Activated CD8-positive, alpha-beta T cell treated with anti-CD3 and anti-CD28 coated beads, Interleukin-2, amount 10 ng/mL, durations not matched to agents 7 days and 5 days (primary cell): ENCODE measurements at regions of chr11 and their contacts with region 1.

Region 1: GRCh38 chr11:94897330-94897768 is 76.0 kb downstream of the CWC15 start:
- DNase-seq: peak; percentile 59
- ATAC-seq: no peak
- H3K4me3 Mint-ChIP-seq: no peak overlapping the region
- H3K27ac Mint-ChIP-seq: no peak overlapping the region
- H3K4me1 Mint-ChIP-seq: no peaks in the 10 kb centered on the region
- H3K27me3 Mint-ChIP-seq: no peaks in the 10 kb centered on the region

Region 2: GRCh38 chr11:94623120-94623735 is 274.1 kb before region 1 on chr11:
- CTCF ChIA-PET with region 1: interaction called, 21 read pairs
- POLR2A ChIA-PET with region 1: no interaction called
- DNase-seq: peak; percentile 63
- ATAC-seq: peak; percentile 82
- H3K4me3 Mint-ChIP-seq: no peak overlapping the region
- H3K27ac Mint-ChIP-seq: no peak overlapping the region
- H3K4me1 Mint-ChIP-seq: no peaks in the 10 kb centered on the region
- H3K27me3 Mint-ChIP-seq: peaks cover 3% of the 10 kb centered on the region

Region 3: DNA sequence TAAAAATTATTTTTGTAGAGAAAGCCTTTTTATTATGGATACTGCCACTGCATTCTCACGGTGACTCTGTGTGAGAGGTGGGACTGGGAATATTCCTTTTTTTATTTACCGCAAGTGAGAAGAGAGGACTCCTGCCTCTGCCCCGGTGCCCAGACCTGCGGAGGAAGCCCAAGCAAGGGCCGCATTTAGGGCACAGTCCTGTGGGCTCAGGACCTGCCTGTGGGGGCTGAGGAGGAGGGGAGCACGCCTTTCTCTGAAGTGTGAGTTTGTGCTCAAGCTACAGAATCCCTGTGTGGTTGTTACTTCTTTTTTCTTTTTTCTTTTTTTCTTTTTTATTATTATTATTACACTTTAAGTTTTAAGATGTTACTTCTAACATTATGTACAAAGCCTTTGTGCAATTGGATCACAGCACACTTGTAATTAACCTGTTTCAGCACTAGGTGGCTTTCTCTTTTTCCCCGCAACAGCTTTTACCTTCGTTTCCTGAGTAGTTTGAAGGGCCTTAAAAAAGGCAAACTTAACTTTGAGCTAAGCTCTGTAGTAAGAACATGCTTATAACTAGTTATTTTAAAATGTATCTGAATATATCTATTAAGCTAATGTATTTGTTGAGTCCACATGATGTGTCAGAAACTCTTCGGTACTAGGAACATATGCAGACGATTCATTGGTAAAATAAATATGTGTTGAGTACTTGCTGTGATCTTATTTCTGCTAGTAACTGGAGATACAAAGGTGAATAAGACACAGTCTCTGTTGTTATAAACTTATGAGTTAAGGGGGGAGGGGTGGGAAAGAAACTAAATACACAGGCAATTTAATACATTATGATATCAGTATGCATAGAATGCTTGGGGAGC is 110.9 kb before region 1 on chr11:
- CTCF ChIA-PET with region 1: interaction called, 10 read pairs
- POLR2A ChIA-PET with region 1: no interaction called
- DNase-seq: no peak
- ATAC-seq: peak; percentile 61
- H3K4me3 Mint-ChIP-seq: no peak overlapping the region
- H3K27ac Mint-ChIP-seq: no peak overlapping the region
- H3K4me1 Mint-ChIP-seq: no peaks in the 10 kb centered on the region
- H3K27me3 Mint-ChIP-seq: peaks cover 19% of the 10 kb centered on the region

Region 4: DNA sequence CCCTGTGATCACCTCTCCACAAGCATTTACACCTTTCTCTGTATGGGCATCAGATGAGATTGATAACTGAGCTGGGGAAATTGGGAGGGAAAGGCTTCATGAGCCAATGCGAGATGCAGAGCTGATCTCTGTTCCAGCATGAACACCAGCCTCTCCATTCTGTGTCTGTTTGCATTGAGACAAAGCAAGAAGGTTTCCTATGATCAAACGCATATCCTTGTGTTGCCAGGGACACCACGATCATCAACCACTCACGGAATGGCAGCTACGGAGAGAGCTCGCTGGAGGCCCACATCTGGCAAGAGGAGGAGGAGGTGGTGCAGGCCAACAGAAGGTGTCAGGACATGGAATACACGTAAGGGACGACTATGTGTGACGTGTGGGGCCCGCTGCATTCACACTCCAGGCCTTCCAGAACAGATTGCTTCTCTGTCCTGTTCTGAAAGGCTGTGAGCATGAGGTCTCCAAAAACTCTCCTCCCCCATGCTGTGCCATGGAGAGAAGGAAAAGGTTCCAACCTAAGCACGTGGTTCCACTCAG is 32.8 kb before region 1 on chr11:
- CTCF ChIA-PET with region 1: no interaction called
- POLR2A ChIA-PET with region 1: no interaction called
- DNase-seq: no peak
- ATAC-seq: no peak
- H3K4me3 Mint-ChIP-seq: no peak overlapping the region
- H3K27ac Mint-ChIP-seq: no peak overlapping the region
- H3K4me1 Mint-ChIP-seq: no peaks in the 10 kb centered on the region
- H3K27me3 Mint-ChIP-seq: no peaks in the 10 kb centered on the region

Region 5: DNA sequence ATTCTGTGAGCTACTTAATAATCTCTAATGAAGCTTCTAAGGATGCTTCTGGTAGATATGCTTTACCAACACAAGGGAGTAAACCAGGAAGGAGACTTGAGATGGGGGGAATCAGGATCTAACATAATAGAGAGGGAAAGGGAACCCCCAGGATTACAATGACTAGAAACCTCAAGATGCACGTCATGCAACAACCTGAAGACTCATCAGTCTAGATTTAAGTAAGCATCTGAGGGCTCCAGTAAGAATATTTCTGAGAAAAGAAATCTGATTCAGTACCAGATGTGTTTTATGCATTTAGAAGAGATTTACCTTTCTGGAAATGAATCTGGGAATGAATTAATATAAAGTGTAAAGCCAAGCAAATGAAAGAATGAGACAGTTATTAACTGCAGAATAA is 91.4 kb after region 1 on chr11:
- CTCF ChIA-PET with region 1: no interaction called
- POLR2A ChIA-PET with region 1: no interaction called
- DNase-seq: no peak
- ATAC-seq: no peak
- H3K4me3 Mint-ChIP-seq: no peak overlapping the region
- H3K27ac Mint-ChIP-seq: no peak overlapping the region
- H3K4me1 Mint-ChIP-seq: no peaks in the 10 kb centered on the region
- H3K27me3 Mint-ChIP-seq: peaks cover 28% of the 10 kb centered on the region

Region 6: GRCh38 chr11:95014184-95014821 is 117.0 kb after region 1 on chr11:
- CTCF ChIA-PET with region 1: no interaction called
- POLR2A ChIA-PET with region 1: no interaction called
- DNase-seq: no peak
- ATAC-seq: no peak
- H3K4me3 Mint-ChIP-seq: no peak overlapping the region
- H3K27ac Mint-ChIP-seq: no peak overlapping the region
- H3K4me1 Mint-ChIP-seq: no peaks in the 10 kb centered on the region
- H3K27me3 Mint-ChIP-seq: peaks cover 20% of the 10 kb centered on the region

Region 7: GRCh38 chr11:95024958-95025357 is 127.6 kb after region 1 on chr11 and contains the start of gene KDM4E:
- CTCF ChIA-PET with region 1: no interaction called
- POLR2A ChIA-PET with region 1: no interaction called
- DNase-seq: no peak
- ATAC-seq: no peak
- H3K4me3 Mint-ChIP-seq: no peak within 1 kb of the TSS
- H3K27ac Mint-ChIP-seq: no peak within 1 kb of the TSS
- H3K4me1 Mint-ChIP-seq: no peaks in the 10 kb centered on the region
- H3K27me3 Mint-ChIP-seq: peaks cover 5% of the 10 kb centered on the region
- total RNA-seq, gene KDM4E: not detected